Heart right ventricle (tissue), 16 donors: ENCODE measurements at regions of chr4 and their contacts with region 1.

Region 1: GRCh38 chr4:176789955-176790354 is 2.8 kb downstream of the VEGFC start:
- DNase-seq: peak in 1 of 2 donors; percentile 13
- ATAC-seq: peak in 5 of 8 donors; percentile 27 to 53 (median 47)
- H3K4me3 ChIP-seq: peak overlapping the region in 8 of 10 donors; percentile 63 to 80 (median 76)
- H3K27ac ChIP-seq: peak overlapping the region in 5 of 10 donors; percentile 83 to 89 (median 87)
- H3K4me1 ChIP-seq: peaks cover 0 to 9% (median 0%) of the 10 kb centered on the region in 9 donors
- H3K27me3 ChIP-seq: peaks cover 0 to 49% (median 0%) of the 10 kb centered on the region in 7 donors
- CTCF ChIP-seq: peak; percentile 30 to 77 (median 66)

Region 2: DNA sequence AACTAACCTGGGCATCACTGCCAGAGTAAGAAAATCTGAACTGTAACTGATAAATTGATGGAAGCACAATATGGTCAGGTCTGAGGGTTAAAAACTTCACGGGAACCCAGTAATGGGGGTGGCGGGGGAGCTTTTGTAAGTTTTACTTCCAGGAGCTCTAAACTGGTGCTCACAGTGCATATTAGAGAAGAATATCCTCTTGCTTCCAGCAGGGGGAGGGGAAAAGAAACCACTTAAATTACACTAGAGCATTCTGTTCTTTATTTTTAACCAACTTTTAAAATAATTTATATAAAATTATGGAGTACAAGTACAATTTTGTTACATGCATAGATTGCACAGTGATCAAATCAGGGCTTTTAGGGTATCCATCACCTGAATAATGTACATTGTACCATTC is 690.6 kb before region 1 on chr4:
- intact Hi-C with region 1: no loop called
- DNase-seq: no peak
- ATAC-seq: no peak
- H3K4me3 ChIP-seq: no peak overlapping the region
- H3K27ac ChIP-seq: no peak overlapping the region
- H3K4me1 ChIP-seq: no peaks in the 10 kb centered on the region
- H3K27me3 ChIP-seq: no peaks in the 10 kb centered on the region
- CTCF ChIP-seq: peak in 1 of 9 donors; percentile 8

Region 3: GRCh38 chr4:176377780-176378179 is 412.2 kb before region 1 on chr4:
- intact Hi-C with region 1: loop called in 7 of 10 experiments (anchors 2 to 5 kb)
- DNase-seq: no peak
- ATAC-seq: peak in 2 of 8 donors; percentile 21 to 22
- H3K4me3 ChIP-seq: no peak overlapping the region
- H3K27ac ChIP-seq: no peak overlapping the region
- H3K4me1 ChIP-seq: peaks cover 0 to 1% (median 0%) of the 10 kb centered on the region in 9 donors
- H3K27me3 ChIP-seq: no peaks in the 10 kb centered on the region
- CTCF ChIP-seq: peak in 8 of 9 donors; percentile 29 to 72 (median 52)

Region 4: GRCh38 chr4:176492646-176493302 is 297.2 kb before region 1 on chr4:
- intact Hi-C with region 1: loop called in 1 of 10 experiments (anchors 2 kb)
- DNase-seq: no peak
- ATAC-seq: peak in 6 of 8 donors; percentile 71 to 92 (median 83)
- H3K4me3 ChIP-seq: peak overlapping the region in 1 of 10 donors; percentile 12
- H3K27ac ChIP-seq: peak overlapping the region in 8 of 10 donors; percentile 6 to 77 (median 60)
- H3K4me1 ChIP-seq: peaks cover 0 to 8% (median 0%) of the 10 kb centered on the region in 9 donors
- H3K27me3 ChIP-seq: no peaks in the 10 kb centered on the region
- CTCF ChIP-seq: no peak

Region 5: DNA sequence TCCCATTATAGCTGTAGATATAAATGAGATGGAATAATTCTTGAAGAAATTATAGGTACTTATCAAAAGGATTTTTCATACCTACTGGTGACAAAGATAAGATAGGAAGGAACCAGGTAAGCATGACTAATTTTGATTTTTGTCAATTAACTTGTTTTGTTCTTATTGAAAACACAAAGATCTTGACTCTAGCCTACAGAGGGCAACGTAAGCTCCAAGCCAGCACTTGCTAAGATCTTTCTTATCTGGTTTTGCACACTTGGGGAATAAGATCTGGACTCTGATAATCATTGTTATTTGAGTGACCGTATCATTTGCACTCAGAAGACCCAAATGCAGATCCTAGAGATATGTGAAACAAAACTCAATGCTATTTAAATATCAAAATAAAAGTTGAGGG is 220.7 kb before region 1 on chr4:
- intact Hi-C with region 1: loop called in 5 of 10 experiments (anchors 5 to 10 kb)
- DNase-seq: no peak
- ATAC-seq: no peak
- H3K4me3 ChIP-seq: no peak overlapping the region
- H3K27ac ChIP-seq: no peak overlapping the region
- H3K4me1 ChIP-seq: peaks cover 0 to 11% (median 0%) of the 10 kb centered on the region in 9 donors
- H3K27me3 ChIP-seq: no peaks in the 10 kb centered on the region
- CTCF ChIP-seq: peak in 4 of 9 donors; percentile 6 to 21 (median 15)

Region 6: DNA sequence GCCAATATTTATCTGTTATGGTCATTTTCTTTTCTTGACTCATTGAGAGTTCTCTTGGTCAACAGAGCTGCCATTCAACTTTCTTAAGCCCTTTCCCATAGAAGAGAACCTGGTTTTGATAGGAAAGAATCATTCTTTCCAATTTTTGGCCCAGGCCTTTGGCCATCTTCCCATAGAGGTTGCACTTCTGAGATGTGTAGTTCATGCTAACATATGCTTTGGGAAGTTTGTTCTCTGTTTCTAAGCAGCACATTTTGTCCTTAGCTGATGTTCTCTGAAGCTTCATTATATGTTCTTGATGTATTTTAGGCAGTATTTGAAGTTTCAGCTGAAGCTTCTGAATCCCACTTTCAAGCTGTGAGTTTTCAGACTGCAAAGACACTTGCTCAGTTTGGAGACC is 158.3 kb before region 1 on chr4:
- intact Hi-C with region 1: no loop called
- DNase-seq: no peak
- ATAC-seq: no peak
- H3K4me3 ChIP-seq: no peak overlapping the region
- H3K27ac ChIP-seq: no peak overlapping the region
- H3K4me1 ChIP-seq: peaks cover 0 to 17% (median 4%) of the 10 kb centered on the region in 9 donors
- H3K27me3 ChIP-seq: no peaks in the 10 kb centered on the region
- CTCF ChIP-seq: no peak

Region 7: DNA sequence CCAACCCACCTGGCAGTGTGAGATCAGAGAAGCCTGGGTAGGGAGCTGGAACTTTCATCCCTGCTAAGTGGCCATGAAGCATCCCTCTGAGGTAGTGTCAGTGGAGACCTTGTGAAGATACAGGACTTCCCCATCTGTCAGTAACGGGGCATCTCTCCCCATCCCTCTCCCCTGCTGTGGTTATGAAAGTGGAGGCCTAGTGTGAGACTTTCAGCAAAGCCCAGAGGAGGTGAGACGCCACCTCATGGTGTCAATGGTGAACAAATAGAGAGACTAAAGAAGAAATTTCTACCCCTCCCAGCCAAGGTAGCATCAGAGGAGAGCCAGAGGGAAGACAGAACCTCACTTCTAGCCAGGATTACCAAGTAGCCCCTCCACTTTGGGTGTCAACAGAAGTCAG is 147.5 kb before region 1 on chr4:
- intact Hi-C with region 1: no loop called
- DNase-seq: no peak
- ATAC-seq: no peak
- H3K4me3 ChIP-seq: no peak overlapping the region
- H3K27ac ChIP-seq: no peak overlapping the region
- H3K4me1 ChIP-seq: no peaks in the 10 kb centered on the region
- H3K27me3 ChIP-seq: no peaks in the 10 kb centered on the region
- CTCF ChIP-seq: no peak

Region 8: DNA sequence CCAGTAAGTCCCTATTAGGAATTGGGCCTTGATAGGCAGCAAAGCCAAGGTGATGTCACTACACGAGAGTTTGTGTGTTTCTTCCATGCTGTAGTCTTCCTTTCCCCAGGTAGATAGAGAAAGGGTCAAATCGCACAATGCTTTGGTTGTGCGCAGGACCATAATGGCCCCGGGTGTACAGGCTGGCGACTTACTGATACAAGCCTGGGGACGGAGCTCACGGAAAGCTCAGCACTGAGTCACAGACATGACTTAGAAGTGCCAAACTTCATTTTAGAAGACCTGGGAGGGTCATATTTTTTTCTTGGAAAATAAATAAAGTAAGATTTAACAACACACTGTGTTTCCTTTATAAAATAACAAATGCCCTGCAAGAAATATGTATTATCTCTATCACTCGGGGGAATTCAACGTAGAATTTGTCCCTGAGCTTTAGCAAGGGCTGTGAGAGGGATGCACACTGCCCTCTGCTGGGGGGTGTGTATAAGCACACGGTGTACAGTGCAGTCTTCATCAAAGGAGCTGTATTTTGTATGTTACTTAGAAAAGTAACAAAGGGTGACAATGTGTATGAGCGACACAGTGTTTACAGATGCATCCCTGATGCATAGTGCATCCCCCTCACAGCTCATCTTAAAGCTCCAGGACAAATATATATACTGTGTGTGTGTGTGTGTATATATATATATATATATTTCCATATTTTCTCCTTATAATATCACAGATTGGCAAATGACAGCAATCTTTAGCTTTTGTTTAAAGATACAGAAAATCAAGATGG is 257.3 kb after region 1 on chr4:
- intact Hi-C with region 1: loop called in 8 of 10 experiments (anchors 2 to 10 kb)
- DNase-seq: peak; percentile 52 to 60
- ATAC-seq: peak; percentile 71 to 92 (median 79)
- H3K4me3 ChIP-seq: no peak overlapping the region
- H3K27ac ChIP-seq: no peak overlapping the region
- H3K4me1 ChIP-seq: peaks cover 0 to 6% (median 0%) of the 10 kb centered on the region in 9 donors
- H3K27me3 ChIP-seq: no peaks in the 10 kb centered on the region
- CTCF ChIP-seq: peak; percentile 74 to 90 (median 85)